Caco-2 (cell line): ENCODE measurements at regions of chrX and their contacts with region 1.

Region 1: DNA sequence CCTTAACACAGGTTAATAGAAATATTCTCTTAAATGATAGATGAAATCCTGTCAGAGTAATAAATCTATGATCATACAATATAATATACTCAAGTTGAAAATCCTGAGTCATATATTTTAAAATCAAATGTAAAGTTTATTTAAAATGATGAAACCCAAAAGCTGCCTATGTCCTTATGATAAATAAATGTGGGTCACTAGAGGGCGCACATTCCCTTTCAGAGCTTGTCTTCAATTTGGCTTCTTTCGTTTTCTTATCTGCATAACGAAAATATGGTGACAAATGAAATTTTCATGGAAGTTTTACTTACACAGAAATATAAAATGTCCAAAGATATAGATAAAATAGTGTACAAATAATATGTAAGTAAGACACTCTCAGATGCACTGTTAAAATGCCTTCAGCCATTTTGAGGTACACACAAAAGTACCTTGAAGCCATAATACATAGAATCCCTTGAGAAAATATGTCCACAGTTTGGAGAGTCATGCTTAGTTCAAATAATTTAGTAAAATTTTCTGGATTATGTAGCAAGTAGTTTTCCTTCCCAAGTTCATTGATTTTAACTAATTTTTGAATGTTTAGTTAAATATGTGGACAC is 680.4 kb downstream of the DMD start:
- DNase-seq: peak in 1 of 2 experiments; percentile 46
- H3K4me3 ChIP-seq: no peak overlapping the region
- H3K4me3 Mint-ChIP-seq: no peak overlapping the region
- H3K27ac Mint-ChIP-seq: no peak overlapping the region
- H3K4me1 ChIP-seq: peaks cover 45% of the 10 kb centered on the region
- H3K4me1 Mint-ChIP-seq: peaks cover 14% of the 10 kb centered on the region
- H3K27me3 ChIP-seq: no peaks in the 10 kb centered on the region
- H3K27me3 Mint-ChIP-seq: no peaks in the 10 kb centered on the region
- CTCF ChIP-seq: peak; percentile 40 to 50

Region 2: DNA sequence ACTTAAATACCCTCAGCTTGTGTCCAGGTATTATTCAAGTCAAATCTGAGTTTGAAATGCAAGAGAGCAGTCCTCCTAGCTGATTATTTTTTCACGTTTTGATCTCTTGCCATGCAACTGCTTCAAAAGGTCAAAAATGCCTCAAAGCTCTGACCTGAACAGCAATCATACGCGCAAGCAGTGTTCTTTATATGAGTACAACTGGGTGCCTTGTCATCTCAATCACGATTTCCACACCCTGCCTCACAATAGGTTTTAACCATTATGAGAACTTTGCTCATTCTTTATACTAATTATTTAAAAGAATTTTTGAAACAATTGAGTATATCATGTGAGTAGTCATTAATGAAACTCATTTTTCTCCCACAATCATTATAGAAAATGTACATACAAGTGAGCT is 31.4 kb after region 1 on chrX:
- CTCF ChIA-PET with region 1: no interaction called
- POLR2A ChIA-PET with region 1: interaction called, 18 read pairs
- intact Hi-C with region 1: loop called (anchors 1 kb)
- DNase-seq: no peak
- H3K4me3 ChIP-seq: no peak overlapping the region
- H3K4me3 Mint-ChIP-seq: peak overlapping the region; percentile 65
- H3K27ac Mint-ChIP-seq: no peak overlapping the region
- H3K4me1 ChIP-seq: peaks cover 7% of the 10 kb centered on the region
- H3K4me1 Mint-ChIP-seq: peaks cover 18% of the 10 kb centered on the region
- H3K27me3 ChIP-seq: no peaks in the 10 kb centered on the region
- H3K27me3 Mint-ChIP-seq: no peaks in the 10 kb centered on the region
- CTCF ChIP-seq: no peak

Region 3: GRCh38 chrX:32571579-32571978 is 40.7 kb after region 1 on chrX:
- CTCF ChIA-PET with region 1: interaction called, 3 read pairs
- POLR2A ChIA-PET with region 1: no interaction called
- intact Hi-C with region 1: loop called (anchors 1 kb)
- DNase-seq: peak in 1 of 2 experiments; percentile 22
- H3K4me3 ChIP-seq: no peak overlapping the region
- H3K4me3 Mint-ChIP-seq: peak overlapping the region; percentile 2
- H3K27ac Mint-ChIP-seq: peak overlapping the region; percentile 3
- H3K4me1 ChIP-seq: peaks cover 38% of the 10 kb centered on the region
- H3K4me1 Mint-ChIP-seq: peaks cover 2% of the 10 kb centered on the region
- H3K27me3 ChIP-seq: no peaks in the 10 kb centered on the region
- H3K27me3 Mint-ChIP-seq: no peaks in the 10 kb centered on the region
- CTCF ChIP-seq: no peak

Region 4: GRCh38 chrX:32644476-32645245 is 113.8 kb after region 1 on chrX:
- CTCF ChIA-PET with region 1: no interaction called
- POLR2A ChIA-PET with region 1: no interaction called
- intact Hi-C with region 1: loop called (anchors 10 kb)
- DNase-seq: no peak
- H3K4me3 ChIP-seq: no peak overlapping the region
- H3K4me3 Mint-ChIP-seq: no peak overlapping the region
- H3K27ac Mint-ChIP-seq: no peak overlapping the region
- H3K4me1 ChIP-seq: no peaks in the 10 kb centered on the region
- H3K4me1 Mint-ChIP-seq: peaks cover 7% of the 10 kb centered on the region
- H3K27me3 ChIP-seq: no peaks in the 10 kb centered on the region
- H3K27me3 Mint-ChIP-seq: no peaks in the 10 kb centered on the region
- CTCF ChIP-seq: no peak

Region 5: DNA sequence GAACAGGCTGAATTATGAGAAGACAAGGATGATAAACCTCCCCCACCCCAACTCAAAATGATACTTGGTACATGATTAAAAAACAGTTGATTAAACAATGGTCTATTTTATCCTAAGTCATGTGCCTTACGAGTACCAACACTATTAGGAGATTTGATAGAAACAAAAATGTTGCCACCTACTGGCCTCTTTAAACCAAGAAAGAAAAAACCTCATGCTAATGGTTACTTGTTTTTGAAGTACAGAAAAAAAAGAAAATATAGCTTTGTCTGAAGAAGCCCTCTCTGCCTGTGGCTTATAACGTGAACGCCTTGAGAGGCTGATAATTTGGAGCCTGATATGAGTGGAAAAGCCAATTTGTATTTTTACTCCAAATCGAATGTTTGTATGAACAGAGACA is 142.3 kb after region 1 on chrX:
- CTCF ChIA-PET with region 1: no interaction called
- POLR2A ChIA-PET with region 1: no interaction called
- intact Hi-C with region 1: loop called (anchors 1 kb)
- DNase-seq: peak in 1 of 2 experiments; percentile 13
- H3K4me3 ChIP-seq: no peak overlapping the region
- H3K4me3 Mint-ChIP-seq: no peak overlapping the region
- H3K27ac Mint-ChIP-seq: no peak overlapping the region
- H3K4me1 ChIP-seq: peaks cover 11% of the 10 kb centered on the region
- H3K4me1 Mint-ChIP-seq: peaks cover 7% of the 10 kb centered on the region
- H3K27me3 ChIP-seq: no peaks in the 10 kb centered on the region
- H3K27me3 Mint-ChIP-seq: no peaks in the 10 kb centered on the region
- CTCF ChIP-seq: no peak

Region 6: DNA sequence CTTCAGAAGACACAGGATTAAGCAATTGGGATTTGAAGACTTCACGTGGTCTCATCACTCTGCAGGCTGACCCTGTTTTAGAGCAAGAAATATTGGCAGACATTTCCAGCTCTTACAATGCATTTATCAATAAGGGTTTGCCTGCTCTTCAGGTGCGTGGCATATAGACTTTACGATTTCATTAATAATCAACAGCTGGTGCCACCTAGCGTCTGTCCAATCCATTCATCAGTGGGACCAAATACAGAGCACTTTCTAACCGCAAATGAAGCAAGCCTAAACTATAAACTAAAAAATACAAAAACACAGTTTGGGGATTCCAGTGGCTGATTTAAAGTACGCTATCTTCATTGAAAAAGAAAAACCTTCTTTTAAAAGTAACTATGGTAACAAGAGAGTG is 805.9 kb after region 1 on chrX:
- CTCF ChIA-PET with region 1: no interaction called
- POLR2A ChIA-PET with region 1: no interaction called
- intact Hi-C with region 1: loop called (anchors 2 kb)
- DNase-seq: peak in 1 of 2 experiments; percentile 9
- H3K4me3 ChIP-seq: no peak overlapping the region
- H3K4me3 Mint-ChIP-seq: no peak overlapping the region
- H3K27ac Mint-ChIP-seq: no peak overlapping the region
- H3K4me1 ChIP-seq: no peaks in the 10 kb centered on the region
- H3K4me1 Mint-ChIP-seq: no peaks in the 10 kb centered on the region
- H3K27me3 ChIP-seq: no peaks in the 10 kb centered on the region
- H3K27me3 Mint-ChIP-seq: peaks cover 3% of the 10 kb centered on the region
- CTCF ChIP-seq: peak; percentile 37 to 49